K562 (cell line): ENCODE measurements at regions of chr5 and their contacts with region 1.

Region 1: GRCh38 chr5:139385061-139386049 is 2.3 kb upstream of the SLC23A1 start:
- DNase-seq: peak; percentile 66 to 80 (median 72)
- ATAC-seq: peak; percentile 88
- H3K4me3 ChIP-seq: peak overlapping the region; percentile 24
- H3K27ac ChIP-seq: peak overlapping the region; percentile 21; the same call in 2 of the 3 replicates
- H3K4me1 ChIP-seq: peaks cover 26 to 60% of the 10 kb centered on the region in 2 experiments; a peak in 4 of 5 replicates
- H3K27me3 ChIP-seq: no peaks in the 10 kb centered on the region
- CTCF ChIP-seq: peak; percentile 67 to 77 (median 75)
- EP300 ChIP-seq: peak; percentile 14; the same call in 1 of the 2 replicates
- POLR2A ChIP-seq: no peak
- RAD21 ChIP-seq: peak; percentile 51 to 86

Region 2: GRCh38 chr5:139403787-139404483 is 18.6 kb after region 1 on chr5 and contains the start of gene SPATA24:
- CTCF ChIA-PET with region 1: no interaction called
- POLR2A ChIA-PET with region 1: interaction called, 5 read pairs
- in situ Hi-C with region 1: no loop called
- intact Hi-C with region 1: loop called (anchors 2 kb)
- DNase-seq: peak; percentile 98 to 99 (median 99)
- ATAC-seq: peak; percentile 98
- H3K4me3 ChIP-seq: peak within 1 kb of the TSS; percentile 50
- H3K27ac ChIP-seq: peak within 1 kb of the TSS; percentile 90
- H3K4me1 ChIP-seq: peaks cover 11 to 15% of the 10 kb centered on the region in 2 experiments; a peak in 4 of 5 replicates
- H3K27me3 ChIP-seq: no peaks in the 10 kb centered on the region
- CTCF ChIP-seq: no peak
- EP300 ChIP-seq: no peak
- POLR2A ChIP-seq: peak; percentile 70
- RAD21 ChIP-seq: no peak
- polyA plus RNA-seq, gene SPATA24: 4.1 to 4.6 TPM

Region 3: DNA sequence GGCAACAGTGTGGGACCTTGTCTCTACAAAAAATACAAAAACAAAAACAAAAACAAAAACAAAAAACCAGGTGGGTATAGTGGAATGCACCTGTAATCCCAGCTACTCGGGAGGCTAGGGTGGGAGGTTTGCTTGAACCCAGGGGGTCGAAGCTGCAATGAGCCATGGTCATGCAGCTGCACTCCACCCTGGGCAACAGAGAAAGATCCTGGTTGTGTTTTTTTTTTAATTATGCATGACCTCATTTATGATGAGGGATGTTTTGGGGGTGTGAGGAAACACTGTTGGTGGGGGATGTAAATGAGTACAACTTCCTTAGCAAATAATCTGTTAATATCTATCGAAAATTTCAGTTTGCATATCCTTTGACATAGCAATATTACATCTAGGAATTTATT is 146.4 kb after region 1 on chr5:
- CTCF ChIA-PET with region 1: no interaction called
- POLR2A ChIA-PET with region 1: no interaction called
- in situ Hi-C with region 1: no loop called
- intact Hi-C with region 1: no loop called
- DNase-seq: no peak
- ATAC-seq: no peak
- H3K4me3 ChIP-seq: no peak overlapping the region
- H3K27ac ChIP-seq: no peak overlapping the region
- H3K4me1 ChIP-seq: no peaks in the 10 kb centered on the region
- H3K27me3 ChIP-seq: no peaks in the 10 kb centered on the region
- CTCF ChIP-seq: no peak
- EP300 ChIP-seq: no peak
- POLR2A ChIP-seq: no peak
- RAD21 ChIP-seq: no peak